ENCODE measurements at regions of chr11 and their contacts with region 1.

Region 1: GRCh38 chr11:68076371-68077042 is 37.7 kb downstream of the TCIRG1 start:
- DNase-seq: peak in 1 of 2 donors; percentile 23
- ATAC-seq: peak; percentile 62

Region 2: GRCh38 chr11:68038718-68039525 is 37.6 kb before region 1 on chr11 and contains the start of gene TCIRG1:
- intact Hi-C with region 1: no loop called
- DNase-seq: peak; percentile 90
- ATAC-seq: peak; percentile 84
- total RNA-seq, gene TCIRG1: 140 to 156 TPM

Region 3: GRCh38 chr11:68206187-68206601 is 129.7 kb after region 1 on chr11:
- intact Hi-C with region 1: loop called in 1 of 2 experiments (anchors 10 kb)
- DNase-seq: no peak
- ATAC-seq: peak; percentile 47

Measured in left colon (tissue), 2 donors.